Mucosa of descending colon (tissue), 3 donors: ENCODE measurements at regions of chr7 and their contacts with region 1.

Region 1: GRCh38 chr7:151459726-151460473 is 20.0 kb upstream of the CRYGN start:
- DNase-seq: peak; percentile 81 to 83 (median 82)
- ATAC-seq: peak; percentile 94
- H3K4me3 ChIP-seq: no peak overlapping the region
- H3K4me1 ChIP-seq: peaks cover 19% of the 10 kb centered on the region
- CTCF ChIP-seq: no peak

Region 2: GRCh38 chr7:151315038-151315655 is 144.8 kb before region 1 on chr7:
- intact Hi-C with region 1: loop called in 1 of 2 experiments (anchors 10 kb)
- DNase-seq: peak in 2 of 3 donors; percentile 42 to 91
- ATAC-seq: peak; percentile 85
- H3K4me3 ChIP-seq: no peak overlapping the region
- H3K4me1 ChIP-seq: peaks cover 8% of the 10 kb centered on the region
- CTCF ChIP-seq: peak; percentile 46

Region 3: DNA sequence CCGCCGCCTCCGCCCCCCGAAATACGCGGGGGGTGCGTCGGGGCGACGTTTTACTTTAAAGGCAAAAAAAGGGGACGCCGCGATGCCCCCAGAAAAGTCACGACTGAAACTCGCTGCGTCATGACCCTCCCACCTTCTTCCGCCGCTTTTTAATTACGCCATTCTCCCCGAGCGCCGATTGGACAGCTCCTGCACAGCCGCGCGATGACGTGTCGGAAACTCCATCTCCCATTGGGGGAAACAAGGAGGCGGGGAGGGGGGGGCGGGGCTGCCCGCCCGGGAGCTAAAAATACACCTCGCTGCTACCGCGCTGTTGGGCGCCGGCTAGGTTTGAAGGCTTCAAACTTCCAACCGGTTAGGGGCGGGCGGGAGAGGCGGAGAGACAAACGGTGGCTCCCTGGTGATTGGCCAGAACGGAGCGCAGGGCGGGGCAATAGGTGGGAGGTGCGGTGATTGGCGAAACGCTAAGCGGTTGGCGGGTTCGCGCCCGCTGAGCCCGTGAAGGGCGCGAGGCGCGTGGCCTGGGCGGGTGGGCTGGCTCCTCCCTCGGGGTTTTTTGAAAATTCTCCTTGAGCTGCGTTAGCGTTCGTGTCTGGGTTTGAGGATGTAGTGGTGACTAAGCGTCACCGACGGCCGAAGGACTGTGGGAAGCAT is 60.0 kb after region 1 on chr7 and contains the start of gene RHEB:
- intact Hi-C with region 1: loop called in 1 of 2 experiments (anchors 10 kb)
- DNase-seq: peak; percentile 98 to 99 (median 99)
- ATAC-seq: peak; percentile 89
- H3K4me3 ChIP-seq: peak within 1 kb of the TSS; percentile 84
- H3K4me1 ChIP-seq: peaks cover 10% of the 10 kb centered on the region
- CTCF ChIP-seq: no peak
- total RNA-seq, gene RHEB: 40.3 to 114 (median 73.5) TPM

Region 4: GRCh38 chr7:151759591-151760042 is 299.7 kb after region 1 on chr7:
- intact Hi-C with region 1: loop called in 1 of 2 experiments (anchors 10 kb)
- DNase-seq: peak in 1 of 3 donors; percentile 66
- ATAC-seq: peak; percentile 59
- H3K4me3 ChIP-seq: no peak overlapping the region
- H3K4me1 ChIP-seq: peaks cover 18% of the 10 kb centered on the region
- CTCF ChIP-seq: peak; percentile 48